CD4-positive, alpha-beta memory T cell (primary cell): ENCODE measurements at regions of chr17 and their contacts with region 1.

Region 1: GRCh38 chr17:36183001-36183971 is 6.8 kb upstream of the TBC1D3B start:
- DNase-seq: peak in 1 of 5 donors; percentile 48
- H3K4me3 ChIP-seq: no peak overlapping the region
- H3K4me3 Mint-ChIP-seq: peak overlapping the region in 5 of 8 donors; percentile 42 to 79 (median 50)
- H3K27ac ChIP-seq: no peak overlapping the region
- H3K27ac Mint-ChIP-seq: peak overlapping the region in 1 of 7 donors; percentile 11
- H3K4me1 ChIP-seq: no peaks in the 10 kb centered on the region
- H3K4me1 Mint-ChIP-seq: peaks cover 1 to 19% (median 5%) of the 10 kb centered on the region in 4 donors
- H3K27me3 ChIP-seq: no peaks in the 10 kb centered on the region
- H3K27me3 Mint-ChIP-seq: peaks cover 33 to 42% of the 10 kb centered on the region in 2 donors

Region 2: DNA sequence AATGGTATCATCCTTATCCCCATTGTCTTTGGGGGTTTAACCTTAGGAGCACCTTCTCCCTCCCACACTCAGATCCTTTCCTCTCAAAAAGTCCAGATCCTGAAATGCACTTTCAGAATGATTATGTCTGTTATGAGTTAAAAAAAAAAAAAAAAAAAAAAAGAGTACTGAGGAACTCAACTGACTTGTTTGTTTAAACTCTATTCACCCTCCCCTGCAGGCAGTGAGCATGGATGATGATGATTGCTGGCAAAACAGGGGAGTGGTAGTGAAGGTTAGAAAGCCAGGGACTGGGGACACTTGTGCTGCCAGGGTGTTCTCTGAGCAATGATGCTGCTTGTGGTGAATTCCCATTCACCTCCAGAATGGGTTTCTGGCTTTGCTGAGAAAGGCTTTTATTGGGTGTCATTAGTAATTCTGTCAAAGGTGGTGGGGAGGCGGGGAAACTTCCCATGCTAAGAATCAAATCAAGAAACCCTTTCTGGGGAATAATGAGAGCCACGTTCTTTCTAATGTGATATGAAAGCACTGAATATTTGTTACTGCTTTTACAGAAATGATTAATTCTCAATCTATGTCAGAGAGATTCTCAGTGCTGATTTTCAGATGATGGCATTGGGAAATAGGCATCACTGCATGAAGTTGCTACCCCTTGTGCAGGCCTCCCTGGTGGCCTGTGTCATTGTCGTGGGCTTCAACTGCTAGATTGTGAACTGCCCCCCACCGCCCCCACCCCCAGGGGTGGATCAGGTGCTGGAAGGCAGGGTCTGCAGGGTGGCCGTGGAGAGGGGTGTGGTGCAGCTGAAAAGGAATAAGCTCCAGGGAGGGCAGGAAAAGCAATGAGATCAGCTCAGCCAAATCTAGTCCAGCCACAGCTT is 65.5 kb before region 1 on chr17:
- CTCF ChIA-PET with region 1: no interaction called
- POLR2A ChIA-PET with region 1: no interaction called
- intact Hi-C with region 1: loop called (anchors 10 kb)
- DNase-seq: no peak
- H3K4me3 ChIP-seq: no peak overlapping the region
- H3K4me3 Mint-ChIP-seq: no peak overlapping the region
- H3K27ac ChIP-seq: no peak overlapping the region
- H3K27ac Mint-ChIP-seq: no peak overlapping the region
- H3K4me1 ChIP-seq: no peaks in the 10 kb centered on the region
- H3K4me1 Mint-ChIP-seq: no peaks in the 10 kb centered on the region
- H3K27me3 ChIP-seq: no peaks in the 10 kb centered on the region
- H3K27me3 Mint-ChIP-seq: peaks cover 3 to 7% of the 10 kb centered on the region in 2 donors